HEK293 (cell line): ENCODE measurements at regions of chr3 and their contacts with region 1.

Region 1: GRCh38 chr3:158790901-158791589 is 10.8 kb upstream of the MFSD1 start:
- H3K4me3 ChIP-seq: no peak overlapping the region
- H3K27ac ChIP-seq: no peak overlapping the region
- H3K4me1 ChIP-seq: no peaks in the 10 kb centered on the region
- CTCF ChIP-seq: peak; percentile 49

Region 2: DNA sequence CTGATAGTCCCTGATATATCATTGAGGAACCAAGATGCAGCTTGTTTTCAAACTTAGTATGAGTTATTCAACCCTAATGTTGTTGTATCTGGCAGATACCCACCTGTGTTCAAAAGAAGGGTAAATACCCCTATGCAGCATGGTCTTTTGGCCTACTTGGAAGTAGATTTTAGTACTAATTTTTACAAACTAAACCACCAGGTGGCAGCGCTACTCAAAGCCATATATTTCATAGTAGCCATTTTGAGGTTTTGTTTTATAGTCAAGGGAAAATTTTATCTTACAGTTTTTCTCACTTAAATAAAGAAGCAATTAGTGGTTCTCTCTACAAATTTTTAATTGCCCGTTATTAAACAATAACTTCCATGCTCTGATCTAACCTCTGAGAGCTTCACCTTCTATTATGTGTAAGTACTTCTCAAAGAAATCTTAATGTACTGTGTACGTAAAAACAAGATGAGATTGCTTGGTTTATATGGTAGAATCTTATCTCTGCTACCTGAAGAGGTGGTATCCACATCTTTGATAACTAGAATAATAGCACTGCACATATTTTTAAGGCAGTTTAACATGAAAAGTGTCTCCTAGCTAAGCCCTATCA is 251.5 kb before region 1 on chr3:
- CTCF ChIA-PET with region 1: interaction called, 19 read pairs
- POLR2A ChIA-PET with region 1: no interaction called
- H3K4me3 ChIP-seq: no peak overlapping the region
- H3K27ac ChIP-seq: no peak overlapping the region
- H3K4me1 ChIP-seq: no peaks in the 10 kb centered on the region
- CTCF ChIP-seq: no peak

Region 3: GRCh38 chr3:158659454-158660237 is 131.4 kb before region 1 on chr3:
- CTCF ChIA-PET with region 1: interaction called, 51 read pairs
- POLR2A ChIA-PET with region 1: no interaction called
- H3K4me3 ChIP-seq: no peak overlapping the region
- H3K27ac ChIP-seq: no peak overlapping the region
- H3K4me1 ChIP-seq: no peaks in the 10 kb centered on the region
- CTCF ChIP-seq: no peak

Region 4: DNA sequence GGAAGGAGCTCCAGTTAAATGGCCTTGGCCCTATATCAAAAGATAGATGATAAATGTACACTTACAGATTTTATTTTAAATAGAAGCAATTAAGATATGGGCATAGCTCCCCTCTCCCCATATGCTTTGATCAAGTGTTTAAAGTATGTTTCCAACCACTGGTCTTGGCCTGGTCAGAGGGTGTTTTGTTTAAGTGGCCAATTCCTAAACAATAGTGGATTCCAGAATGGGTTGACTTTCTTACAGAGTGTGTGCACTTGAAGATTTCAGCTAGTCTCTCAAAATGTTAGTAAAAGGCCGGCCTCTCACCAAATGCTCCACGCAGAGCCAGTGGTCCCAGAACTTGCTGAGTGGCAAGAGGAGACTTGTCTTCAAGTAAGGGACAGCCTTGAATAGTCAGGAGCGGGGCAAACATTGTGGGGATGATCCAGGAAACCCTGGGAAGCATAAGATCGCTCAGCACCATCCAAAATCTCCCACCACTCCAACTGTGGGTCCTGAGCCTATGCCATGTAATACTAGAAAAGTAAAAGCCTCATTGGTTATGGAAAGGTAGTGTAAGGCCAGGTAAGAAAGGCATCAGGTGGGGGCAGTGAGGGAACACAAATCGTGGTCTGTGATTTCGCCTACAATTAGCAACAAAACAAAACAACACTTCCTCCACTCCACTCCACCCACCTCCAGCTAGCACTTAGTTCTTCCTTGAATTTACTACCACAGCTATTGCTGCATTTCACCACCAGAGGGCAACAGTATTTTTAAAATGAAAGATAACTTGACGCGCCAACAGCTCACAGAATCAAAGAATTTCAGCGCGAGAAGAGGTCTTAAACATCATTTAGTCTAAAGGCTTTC is 63.6 kb before region 1 on chr3:
- CTCF ChIA-PET with region 1: interaction called, 23 read pairs
- POLR2A ChIA-PET with region 1: no interaction called
- H3K4me3 ChIP-seq: no peak overlapping the region
- H3K27ac ChIP-seq: no peak overlapping the region
- H3K4me1 ChIP-seq: peaks cover 4% of the 10 kb centered on the region
- CTCF ChIP-seq: no peak; the same call in 1 of the 2 replicates

Region 5: DNA sequence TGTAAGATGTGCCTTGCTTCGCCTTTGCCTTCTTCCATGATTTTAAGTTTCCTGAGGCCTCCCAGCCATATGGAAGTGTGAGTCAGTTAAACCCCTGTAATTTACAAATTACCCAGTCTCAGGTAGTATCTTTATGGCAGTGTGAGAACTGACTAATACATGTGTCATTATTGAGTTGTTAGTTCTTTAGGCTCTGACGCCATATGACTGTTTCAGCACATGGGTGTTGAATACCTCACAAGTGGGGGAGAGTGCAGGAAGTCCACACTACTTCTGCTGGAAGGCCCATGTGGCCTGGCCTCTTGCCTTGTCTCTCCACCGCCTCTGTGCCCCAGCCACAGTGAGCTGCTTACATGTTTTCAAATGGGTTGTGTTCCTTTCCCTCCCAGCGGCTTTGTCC is 39.3 kb after region 1 on chr3:
- CTCF ChIA-PET with region 1: no interaction called
- POLR2A ChIA-PET with region 1: no interaction called
- H3K4me3 ChIP-seq: no peak overlapping the region
- H3K27ac ChIP-seq: no peak overlapping the region
- H3K4me1 ChIP-seq: no peaks in the 10 kb centered on the region
- CTCF ChIP-seq: no peak

Region 6: DNA sequence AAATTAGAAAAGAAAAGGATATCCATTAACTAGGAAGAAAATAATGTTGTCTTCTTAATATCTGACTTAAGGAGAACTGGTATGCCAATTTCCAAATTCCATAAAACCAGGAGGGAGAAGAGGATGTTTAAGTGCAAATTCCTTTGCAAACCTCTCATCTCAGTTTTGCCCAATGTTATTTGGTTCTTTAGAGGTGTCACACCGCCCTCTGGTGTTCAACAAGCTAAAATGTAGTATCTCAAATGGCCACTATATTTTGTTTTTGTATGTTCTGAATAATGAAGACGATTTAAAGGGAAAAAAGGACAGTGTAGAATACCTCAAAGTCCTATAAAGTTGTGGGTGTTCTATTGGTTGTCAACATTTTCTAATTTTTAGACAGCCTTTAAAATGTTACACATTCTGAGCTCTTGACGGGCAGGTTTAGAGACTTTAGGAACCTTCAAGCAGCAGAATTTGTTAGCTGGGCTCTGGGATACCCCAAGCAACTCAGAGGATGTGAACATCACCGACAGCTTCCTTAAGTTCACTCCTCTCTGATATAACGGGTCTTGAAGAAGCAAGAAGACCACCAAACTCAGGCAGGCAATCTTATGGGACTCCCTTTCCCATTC is 469.1 kb after region 1 on chr3:
- CTCF ChIA-PET with region 1: interaction called, 14 read pairs
- POLR2A ChIA-PET with region 1: no interaction called
- H3K4me3 ChIP-seq: no peak overlapping the region
- H3K27ac ChIP-seq: no peak overlapping the region
- H3K4me1 ChIP-seq: no peaks in the 10 kb centered on the region; the same call in 1 of the 2 replicates
- CTCF ChIP-seq: peak; percentile 40; the same call in 1 of the 2 replicates